ENCODE measurements at regions of chr7 and their contacts with region 1.

Region 1: GRCh38 chr7:97145068-97145467 is 27.6 kb downstream of the SDHAF3 start:
- DNase-seq: peak; percentile 27
- H3K4me3 ChIP-seq: no peak overlapping the region
- H3K27ac ChIP-seq: no peak overlapping the region
- H3K4me1 ChIP-seq: no peaks in the 10 kb centered on the region
- H3K27me3 ChIP-seq: no peaks in the 10 kb centered on the region
- CTCF ChIP-seq: peak; percentile 84
- EP300 ChIP-seq: no peak
- RAD21 ChIP-seq: peak; percentile 77

Region 2: GRCh38 chr7:97133159-97133558 is 11.9 kb before region 1 on chr7:
- CTCF ChIA-PET with region 1: interaction called, 13 read pairs
- POLR2A ChIA-PET with region 1: no interaction called
- DNase-seq: no peak
- H3K4me3 ChIP-seq: no peak overlapping the region
- H3K27ac ChIP-seq: no peak overlapping the region
- H3K4me1 ChIP-seq: peaks cover 0 to 5% of the 10 kb centered on the region in 2 experiments; a peak in 2 of 4 replicates
- H3K27me3 ChIP-seq: no peaks in the 10 kb centered on the region
- CTCF ChIP-seq: no peak
- EP300 ChIP-seq: no peak
- RAD21 ChIP-seq: no peak